ENCODE measurements at regions of chr7 and their contacts with region 1.

Region 1: GRCh38 chr7:92425321-92425947 is 21.8 kb upstream of the GATAD1 start:
- DNase-seq: no peak
- ATAC-seq: no peak
- H3K4me3 ChIP-seq: no peak overlapping the region
- H3K27ac ChIP-seq: no peak overlapping the region
- H3K4me1 ChIP-seq: no peaks in the 10 kb centered on the region; the same call in 1 of the 2 replicates
- H3K27me3 ChIP-seq: peaks cover 3% of the 10 kb centered on the region
- CTCF ChIP-seq: no peak
- POLR2A ChIP-seq: no peak
- RAD21 ChIP-seq: no peak

Region 2: DNA sequence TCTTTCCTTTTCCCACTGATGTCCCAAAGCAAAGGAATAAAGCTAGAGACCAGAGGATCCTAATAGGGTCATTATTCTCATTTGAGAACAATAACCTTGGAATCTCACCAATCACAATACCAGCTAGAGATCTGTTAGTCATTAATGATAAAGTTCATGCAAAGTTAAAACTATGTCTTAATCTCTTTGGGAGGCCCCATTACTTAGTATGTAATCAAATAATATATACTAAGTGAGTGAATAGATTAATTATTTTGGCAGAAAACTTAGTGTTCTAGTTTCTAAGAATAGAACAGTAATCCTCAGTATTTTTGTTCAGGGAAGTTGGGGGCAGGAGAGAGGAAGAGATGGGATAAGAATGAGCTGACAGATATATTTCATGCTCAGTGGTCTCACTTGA is 772.1 kb before region 1 on chr7:
- CTCF ChIA-PET with region 1: interaction called, 10 read pairs
- POLR2A ChIA-PET with region 1: no interaction called
- dilution Hi-C with region 1: no loop called
- in situ Hi-C with region 1: no loop called
- intact Hi-C with region 1: no loop called
- DNase-seq: no peak
- ATAC-seq: no peak
- H3K4me3 ChIP-seq: no peak overlapping the region
- H3K27ac ChIP-seq: no peak overlapping the region
- H3K4me1 ChIP-seq: no peaks in the 10 kb centered on the region
- H3K27me3 ChIP-seq: no peaks in the 10 kb centered on the region
- CTCF ChIP-seq: no peak
- POLR2A ChIP-seq: no peak
- RAD21 ChIP-seq: no peak

Region 3: DNA sequence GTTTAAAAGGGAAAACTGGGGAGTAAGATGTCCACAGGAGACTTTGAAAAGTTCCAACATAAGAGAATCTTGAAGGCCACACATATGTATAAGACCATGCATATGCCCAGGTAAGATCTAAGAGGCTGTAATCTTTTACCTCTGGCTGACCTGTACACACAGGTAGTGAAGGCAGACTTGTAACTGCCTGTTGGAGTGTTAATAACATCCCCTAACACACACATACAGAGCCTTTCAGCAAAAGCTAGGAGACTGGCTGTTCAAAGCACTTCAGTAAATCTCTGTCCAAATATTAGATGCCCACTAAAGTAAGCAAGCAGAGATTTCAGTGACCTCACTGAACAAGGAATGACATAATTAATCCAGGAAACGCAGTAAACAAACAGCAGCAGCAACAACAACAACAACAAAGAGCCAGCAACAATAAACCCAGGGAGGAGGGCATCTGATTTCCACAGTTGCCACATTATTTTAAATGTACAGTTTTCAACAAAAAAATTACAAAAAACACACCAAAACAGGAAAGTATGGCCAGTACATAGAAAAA is 306.1 kb before region 1 on chr7:
- CTCF ChIA-PET with region 1: no interaction called
- POLR2A ChIA-PET with region 1: no interaction called
- dilution Hi-C with region 1: no loop called
- in situ Hi-C with region 1: no loop called
- intact Hi-C with region 1: no loop called
- DNase-seq: no peak
- ATAC-seq: no peak
- H3K4me3 ChIP-seq: no peak overlapping the region
- H3K27ac ChIP-seq: no peak overlapping the region
- H3K4me1 ChIP-seq: no peaks in the 10 kb centered on the region
- H3K27me3 ChIP-seq: no peaks in the 10 kb centered on the region
- CTCF ChIP-seq: no peak
- POLR2A ChIP-seq: no peak
- RAD21 ChIP-seq: no peak

Region 4: DNA sequence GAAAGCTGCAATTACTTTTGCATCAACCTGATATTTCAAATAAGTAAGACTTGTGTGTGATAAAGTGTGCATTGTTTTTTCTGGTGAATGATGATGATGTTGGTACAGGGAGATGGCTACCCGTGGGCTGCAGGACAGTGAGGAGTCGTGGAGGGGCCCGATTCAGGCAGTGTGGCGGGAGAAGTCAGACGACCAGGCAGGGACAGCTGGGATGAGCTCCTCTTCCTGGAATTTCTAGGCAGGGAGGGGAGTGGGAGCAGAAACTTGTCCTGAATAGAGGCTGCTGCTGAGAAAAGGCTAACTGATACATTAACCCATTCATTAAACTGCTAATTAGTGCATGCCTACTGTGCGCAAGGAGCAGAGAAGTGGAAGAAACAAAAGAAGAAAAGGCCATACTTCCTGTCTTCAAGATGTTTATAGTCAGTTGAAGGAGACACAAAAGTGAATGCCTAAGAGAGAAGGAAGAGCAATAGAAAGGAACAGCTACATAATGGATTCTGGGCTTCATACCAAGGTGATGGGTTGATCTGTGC is 12.6 kb after region 1 on chr7:
- CTCF ChIA-PET with region 1: interaction called, 7 read pairs
- POLR2A ChIA-PET with region 1: interaction called, 12 read pairs
- dilution Hi-C with region 1: no loop called
- in situ Hi-C with region 1: no loop called
- intact Hi-C with region 1: no loop called
- DNase-seq: no peak
- ATAC-seq: no peak
- H3K4me3 ChIP-seq: no peak overlapping the region
- H3K27ac ChIP-seq: no peak overlapping the region
- H3K4me1 ChIP-seq: no peaks in the 10 kb centered on the region
- H3K27me3 ChIP-seq: peaks cover 15% of the 10 kb centered on the region
- CTCF ChIP-seq: no peak
- POLR2A ChIP-seq: no peak
- RAD21 ChIP-seq: no peak

Measured in IMR-90 (cell line).